ENCODE measurements at regions of chr12 and their contacts with region 1.

Region 1: DNA sequence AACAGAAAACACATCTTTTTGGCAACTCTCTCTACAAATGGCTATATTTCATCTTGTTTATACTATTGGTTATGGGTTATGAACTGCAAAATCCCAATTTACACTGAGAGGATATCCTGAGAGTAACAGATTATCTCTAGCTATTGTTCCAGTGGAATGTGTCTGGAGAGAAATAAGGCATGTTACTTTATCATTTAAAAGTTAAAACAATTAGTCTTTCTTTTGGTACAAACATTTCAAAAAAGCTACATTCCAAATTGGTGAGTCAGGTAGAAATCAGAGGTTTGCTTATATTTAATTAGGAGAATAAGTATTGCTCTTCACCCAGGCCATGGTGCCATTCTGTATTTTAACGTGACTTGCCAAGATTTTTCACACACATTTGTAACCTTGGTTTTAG is 411.6 kb downstream of the CCER1 start:
- DNase-seq: no peak
- H3K4me3 Mint-ChIP-seq: no peak overlapping the region
- H3K27ac Mint-ChIP-seq: no peak overlapping the region
- H3K4me1 Mint-ChIP-seq: no peaks in the 10 kb centered on the region
- H3K27me3 Mint-ChIP-seq: no peaks in the 10 kb centered on the region
- CTCF ChIP-seq: no peak

Region 2: DNA sequence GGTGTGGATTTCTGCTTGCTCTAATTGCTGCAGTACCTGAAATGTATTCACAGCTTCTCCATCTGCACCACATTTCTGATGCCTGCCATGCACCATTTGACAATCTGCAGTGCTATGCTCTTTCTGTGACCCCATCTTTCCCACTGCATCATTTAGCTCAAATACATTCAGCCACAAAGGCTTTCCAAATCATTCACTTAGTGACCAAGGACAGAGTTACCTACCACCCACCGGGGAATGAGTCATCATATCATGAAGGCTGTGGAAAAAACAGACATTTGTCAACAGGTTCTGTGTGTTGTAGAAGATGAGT is 369.2 kb before region 1 on chr12:
- CTCF ChIA-PET with region 1: no interaction called
- intact Hi-C with region 1: loop called (anchors 10 kb)
- DNase-seq: no peak
- H3K4me3 Mint-ChIP-seq: no peak overlapping the region
- H3K27ac Mint-ChIP-seq: no peak overlapping the region
- H3K4me1 Mint-ChIP-seq: no peaks in the 10 kb centered on the region
- H3K27me3 Mint-ChIP-seq: no peaks in the 10 kb centered on the region
- CTCF ChIP-seq: no peak

Region 3: DNA sequence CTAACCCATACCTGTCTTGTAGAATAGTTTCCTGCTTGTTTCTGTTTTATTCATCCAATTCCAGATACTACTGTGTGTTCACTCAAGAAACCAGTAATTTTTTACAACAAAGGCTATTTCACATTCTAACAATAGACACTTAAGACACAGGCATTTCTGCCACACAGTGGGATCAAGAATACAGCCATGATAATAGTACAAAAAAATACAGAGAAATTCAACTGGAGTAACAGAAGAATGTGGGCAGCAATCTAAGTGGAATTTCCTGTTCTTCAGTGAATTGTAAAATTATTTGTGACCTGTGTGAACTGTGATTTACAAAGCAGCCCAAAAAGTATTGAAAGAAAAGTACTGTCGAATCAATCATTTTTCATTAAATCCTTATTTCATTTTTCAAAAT is 128.7 kb after region 1 on chr12:
- CTCF ChIA-PET with region 1: no interaction called
- intact Hi-C with region 1: no loop called
- DNase-seq: no peak
- H3K4me3 Mint-ChIP-seq: no peak overlapping the region
- H3K27ac Mint-ChIP-seq: no peak overlapping the region
- H3K4me1 Mint-ChIP-seq: no peaks in the 10 kb centered on the region
- H3K27me3 Mint-ChIP-seq: no peaks in the 10 kb centered on the region
- CTCF ChIP-seq: no peak

Measured in Calu3 (cell line).